ENCODE measurements at regions of chr17 and their contacts with region 1.

Region 1: DNA sequence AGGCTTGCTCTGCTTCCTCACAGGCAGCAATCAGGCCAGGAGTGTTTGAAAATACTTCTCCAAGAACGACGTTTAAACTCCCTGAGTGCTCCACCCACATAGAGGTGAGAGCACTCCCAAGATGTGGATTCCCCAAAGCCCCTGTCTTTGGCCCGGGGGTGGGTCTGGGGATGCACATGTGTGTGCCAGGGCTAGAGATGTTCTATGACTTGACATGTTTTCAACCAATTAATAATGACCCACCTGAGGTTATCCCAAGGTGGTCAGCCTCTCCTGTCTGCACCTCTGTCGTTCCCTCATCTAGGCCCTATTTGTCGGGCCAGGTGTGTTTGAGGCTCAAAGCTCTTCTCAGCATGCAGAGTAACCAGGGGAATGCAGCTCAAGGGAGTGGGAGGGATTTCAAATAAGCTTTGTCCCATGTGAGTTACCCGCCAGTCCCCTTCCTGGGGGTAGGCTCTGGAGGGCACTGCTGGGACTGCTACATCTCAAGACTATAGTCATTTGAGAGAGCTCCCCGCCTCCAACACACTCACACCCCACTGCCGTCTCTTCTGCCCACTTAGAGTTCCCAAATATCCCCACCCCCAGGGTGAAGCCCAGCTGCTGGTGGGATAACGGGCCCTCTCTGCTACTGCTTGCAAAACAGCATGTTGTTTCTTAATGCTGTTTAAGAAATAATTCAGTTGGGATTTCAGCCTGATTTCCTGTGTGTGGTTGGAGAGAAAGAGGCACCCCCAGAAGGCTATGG is 3.8 kb upstream of the MPO start:
- DNase-seq: no peak
- ATAC-seq: no peak
- H3K4me3 ChIP-seq: no peak overlapping the region
- H3K27ac ChIP-seq: no peak overlapping the region
- H3K4me1 ChIP-seq: no peaks in the 10 kb centered on the region
- H3K27me3 ChIP-seq: no peaks in the 10 kb centered on the region
- CTCF ChIP-seq: no peak

Region 2: DNA sequence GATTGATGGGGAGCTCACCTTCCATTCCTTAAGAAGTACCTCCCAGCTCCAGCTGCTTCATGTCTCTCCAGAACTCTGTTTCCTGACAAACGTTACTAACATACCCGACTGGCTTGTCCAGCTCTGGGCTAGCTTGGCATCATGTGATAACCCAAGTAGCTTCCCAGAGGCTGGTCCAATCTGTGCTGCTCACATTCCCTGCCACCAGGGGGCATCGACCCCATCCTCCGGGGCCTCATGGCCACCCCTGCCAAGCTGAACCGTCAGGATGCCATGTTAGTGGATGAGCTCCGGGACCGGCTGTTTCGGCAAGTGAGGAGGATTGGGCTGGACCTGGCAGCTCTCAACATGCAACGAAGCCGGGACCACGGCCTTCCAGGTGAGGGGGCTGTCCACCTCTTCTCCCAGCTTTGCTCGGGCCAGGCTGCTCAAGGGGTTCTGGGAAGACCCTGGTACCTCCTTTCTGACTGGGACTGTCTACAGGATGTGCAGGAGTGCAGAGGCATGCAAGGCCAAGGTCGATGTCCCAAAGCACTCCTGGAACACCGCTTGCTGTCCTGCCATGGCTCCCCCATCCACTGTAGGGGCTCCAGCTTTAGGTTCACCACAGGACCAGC is 84.4 kb before region 1 on chr17:
- CTCF ChIA-PET with region 1: interaction called, 14 read pairs
- POLR2A ChIA-PET with region 1: no interaction called
- in situ Hi-C with region 1: no loop called
- intact Hi-C with region 1: no loop called
- DNase-seq: no peak
- ATAC-seq: peak; percentile 86
- H3K4me3 ChIP-seq: no peak overlapping the region
- H3K27ac ChIP-seq: no peak overlapping the region
- H3K4me1 ChIP-seq: no peaks in the 10 kb centered on the region
- H3K27me3 ChIP-seq: no peaks in the 10 kb centered on the region
- CTCF ChIP-seq: peak; percentile 60

Region 3: DNA sequence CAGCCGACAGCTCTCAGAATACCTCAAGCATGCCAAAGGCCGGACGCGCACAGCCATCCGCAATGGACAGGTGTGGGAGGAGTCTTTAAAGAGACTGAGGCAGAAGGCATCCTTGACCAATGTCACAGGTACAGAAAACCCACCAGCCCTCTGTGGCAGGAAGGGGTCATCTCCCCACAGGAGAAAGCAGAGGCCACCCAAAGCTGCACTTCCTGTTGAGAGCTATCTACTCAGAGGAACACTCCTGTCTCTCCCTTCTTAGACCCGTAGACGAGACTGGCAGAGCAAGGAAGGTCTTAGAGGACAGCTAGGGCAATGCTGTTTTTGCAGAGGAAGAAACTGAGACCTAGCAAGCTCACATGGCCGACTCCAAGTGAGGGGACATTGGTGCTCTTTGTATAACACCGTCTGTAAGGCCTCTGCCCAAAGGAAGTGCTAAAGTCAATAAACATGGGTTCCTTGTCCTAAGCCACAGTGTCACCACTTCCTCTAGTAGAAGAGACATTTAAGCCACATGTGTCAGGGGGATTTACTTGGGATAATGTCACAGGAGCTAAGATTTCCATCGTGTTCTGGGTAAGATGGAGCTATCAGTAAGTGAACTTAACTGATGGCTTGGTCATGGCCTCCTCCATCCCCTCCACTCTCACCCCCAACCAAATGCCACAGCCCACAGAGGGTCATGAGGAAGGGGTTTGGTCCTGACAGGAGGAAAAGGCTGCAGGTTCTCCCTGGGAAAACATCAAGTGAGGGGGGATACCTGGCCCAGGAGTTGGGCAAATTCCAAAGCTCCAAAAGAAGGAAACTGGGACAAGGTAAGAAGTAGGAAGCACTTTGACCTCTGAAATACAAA is 36.8 kb before region 1 on chr17:
- CTCF ChIA-PET with region 1: interaction called, 10 read pairs
- POLR2A ChIA-PET with region 1: no interaction called
- in situ Hi-C with region 1: no loop called
- intact Hi-C with region 1: no loop called
- DNase-seq: no peak
- ATAC-seq: no peak
- H3K4me3 ChIP-seq: no peak overlapping the region
- H3K27ac ChIP-seq: no peak overlapping the region
- H3K4me1 ChIP-seq: no peaks in the 10 kb centered on the region
- H3K27me3 ChIP-seq: no peaks in the 10 kb centered on the region
- CTCF ChIP-seq: no peak